H1 (cell line): ENCODE measurements at regions of chr20 and their contacts with region 1.

Region 1: DNA sequence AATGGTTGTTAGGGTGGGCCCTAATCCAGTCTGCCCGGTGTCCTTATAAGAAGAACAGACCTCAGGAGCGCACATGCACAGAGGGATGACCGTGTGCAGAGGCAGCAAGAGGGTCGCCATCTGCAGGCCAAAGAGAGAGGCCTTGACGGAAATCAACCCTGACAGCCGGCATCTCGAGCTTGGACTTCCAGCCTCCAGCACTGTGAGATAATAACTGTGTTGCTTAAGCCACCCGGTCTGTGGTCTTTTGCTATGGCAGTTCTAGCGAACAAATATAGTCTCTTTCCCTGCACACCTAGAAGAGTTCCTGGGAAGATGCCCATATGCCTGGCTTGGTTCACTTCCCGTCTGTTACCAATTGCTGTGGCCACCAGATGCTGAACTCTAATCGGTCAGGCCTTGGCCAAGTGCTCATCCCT is 35.3 kb upstream of the PTGIS start:
- DNase-seq: no peak
- H3K4me3 ChIP-seq: no peak overlapping the region
- H3K27ac ChIP-seq: no peak overlapping the region
- H3K4me1 ChIP-seq: no peaks in the 10 kb centered on the region
- H3K27me3 ChIP-seq: no peaks in the 10 kb centered on the region
- CTCF ChIP-seq: peak; percentile 71 to 77 (median 71)
- EP300 ChIP-seq: no peak
- POLR2A ChIP-seq: no peak
- RAD21 ChIP-seq: peak; percentile 57 to 66

Region 2: DNA sequence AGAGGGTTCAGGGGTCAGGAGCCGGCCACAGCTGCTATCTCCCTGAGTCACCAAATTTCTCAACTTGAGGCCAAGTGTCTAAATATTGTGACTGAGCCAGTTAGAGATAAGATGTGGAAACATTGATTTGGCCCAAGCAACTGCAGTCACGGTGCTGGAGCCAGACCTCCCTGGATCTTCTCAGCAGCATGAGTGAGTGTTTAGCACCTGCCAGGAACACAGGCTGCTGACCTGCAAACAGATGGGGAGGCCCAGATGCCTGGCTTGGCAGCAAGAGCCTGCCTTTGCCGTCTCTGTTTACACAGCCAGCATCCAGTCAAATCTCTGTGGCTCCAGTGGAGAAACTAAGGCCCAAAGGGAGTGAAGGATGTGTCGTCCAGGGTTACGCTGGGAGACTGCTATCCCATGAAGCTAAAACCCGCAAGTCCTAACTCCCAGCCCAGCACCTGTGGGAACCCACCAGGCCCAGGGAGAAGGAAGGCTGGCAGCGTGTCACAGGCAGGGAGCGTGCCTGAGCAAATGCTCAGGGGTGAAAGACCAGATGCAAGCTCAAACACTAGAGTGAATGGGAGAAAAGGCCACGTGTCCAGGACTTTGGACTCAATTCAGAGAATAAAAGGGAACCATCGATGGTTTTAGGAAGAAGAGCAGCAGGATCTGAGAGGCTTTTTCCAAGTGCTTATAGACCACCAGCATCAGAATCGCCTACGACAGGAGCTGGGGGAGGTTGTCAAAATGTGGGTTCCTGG is 19.4 kb before region 1 on chr20:
- CTCF ChIA-PET with region 1: interaction called, 10 read pairs
- POLR2A ChIA-PET with region 1: no interaction called
- DNase-seq: no peak
- H3K4me3 ChIP-seq: no peak overlapping the region
- H3K27ac ChIP-seq: no peak overlapping the region
- H3K4me1 ChIP-seq: peaks cover 0 to 6% (median 3%) of the 10 kb centered on the region in 4 experiments; a peak in 5 of 7 replicates
- H3K27me3 ChIP-seq: no peaks in the 10 kb centered on the region
- CTCF ChIP-seq: no peak
- EP300 ChIP-seq: no peak
- POLR2A ChIP-seq: no peak
- RAD21 ChIP-seq: no peak

Region 3: DNA sequence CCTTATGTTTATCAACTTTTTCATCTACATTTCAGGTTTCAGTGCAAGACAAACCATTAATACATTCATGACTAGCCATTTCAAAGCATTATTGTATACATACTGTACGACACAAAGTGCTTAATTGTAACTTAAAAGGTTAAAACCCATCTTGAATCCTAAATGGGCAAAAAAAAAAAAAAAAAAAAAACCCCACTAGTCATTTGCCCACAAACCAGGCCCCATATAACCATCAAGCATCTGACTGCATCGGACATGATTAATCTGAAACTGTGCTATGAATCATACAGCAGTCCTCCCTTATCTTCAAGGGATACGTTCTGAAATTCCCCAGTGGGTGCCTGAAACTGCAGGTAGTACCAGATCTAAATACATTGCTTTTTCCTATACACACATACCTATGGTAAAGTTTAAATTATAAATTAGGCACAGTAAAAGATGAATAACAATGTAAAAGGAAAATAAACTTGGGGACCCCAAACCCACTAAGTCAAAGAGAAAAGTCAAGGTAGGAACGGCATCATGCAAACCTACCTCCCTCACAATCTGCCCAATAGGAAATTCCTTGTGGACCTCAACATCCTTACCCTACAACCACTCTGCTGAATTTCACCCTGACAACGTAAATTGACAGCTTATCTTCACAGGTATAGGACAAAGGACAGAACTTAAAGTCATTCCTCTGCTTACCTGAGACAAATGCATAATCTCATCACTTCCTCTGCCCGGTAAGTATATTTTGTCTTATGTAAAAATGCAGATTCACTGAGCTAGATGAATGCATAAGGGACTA is 96.2 kb after region 1 on chr20:
- CTCF ChIA-PET with region 1: no interaction called
- POLR2A ChIA-PET with region 1: no interaction called
- DNase-seq: no peak
- H3K4me3 ChIP-seq: no peak overlapping the region
- H3K27ac ChIP-seq: no peak overlapping the region
- H3K4me1 ChIP-seq: peaks cover 3 to 12% (median 9%) of the 10 kb centered on the region in 4 experiments; a peak in 6 of 7 replicates
- H3K27me3 ChIP-seq: no peaks in the 10 kb centered on the region
- CTCF ChIP-seq: no peak
- EP300 ChIP-seq: no peak
- POLR2A ChIP-seq: no peak
- RAD21 ChIP-seq: no peak